Activated B cell treated with CpG ODN at 0.5 μM for 24 hours (primary cell): ENCODE measurements at regions of chr4 and their contacts with region 1.

Region 1: DNA sequence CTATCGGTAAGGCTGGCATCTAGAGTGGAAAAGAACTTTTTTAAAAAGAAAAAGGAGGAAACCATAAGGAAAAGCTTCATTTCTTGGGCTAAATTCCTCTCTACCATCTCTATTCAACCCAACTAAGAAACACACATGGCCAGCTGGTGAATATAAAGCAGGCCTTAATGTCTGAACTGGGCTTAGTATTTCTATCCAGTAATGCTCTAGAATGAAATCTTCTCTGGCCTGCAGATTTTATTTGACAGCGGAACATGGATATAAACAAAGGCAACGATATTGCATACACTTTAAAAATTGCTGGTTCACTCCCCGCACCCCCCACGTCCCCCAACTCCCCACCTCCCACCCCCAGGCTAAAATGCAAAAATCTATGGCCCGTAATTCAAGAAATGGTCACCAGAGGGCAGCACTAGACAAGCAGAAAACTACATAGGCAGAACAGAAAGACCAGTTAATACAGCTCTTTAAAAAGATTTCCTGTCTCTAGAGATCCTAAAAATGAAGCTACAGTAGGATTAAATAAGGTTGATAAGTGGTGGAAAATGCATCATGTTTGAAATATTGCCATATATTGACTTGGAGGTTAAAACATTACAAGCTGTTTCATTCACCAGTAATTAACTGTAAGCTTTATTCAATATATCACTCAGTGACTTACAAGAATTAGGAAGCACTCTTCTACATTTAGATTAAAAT is 155.2 kb upstream of the GALNT7 start:
- DNase-seq: no peak
- ATAC-seq: peak; percentile 61
- H3K4me3 Mint-ChIP-seq: no peak overlapping the region
- H3K27ac Mint-ChIP-seq: no peak overlapping the region
- H3K4me1 Mint-ChIP-seq: no peaks in the 10 kb centered on the region
- H3K27me3 Mint-ChIP-seq: peaks cover 1% of the 10 kb centered on the region
- CTCF ChIP-seq: no peak

Region 2: DNA sequence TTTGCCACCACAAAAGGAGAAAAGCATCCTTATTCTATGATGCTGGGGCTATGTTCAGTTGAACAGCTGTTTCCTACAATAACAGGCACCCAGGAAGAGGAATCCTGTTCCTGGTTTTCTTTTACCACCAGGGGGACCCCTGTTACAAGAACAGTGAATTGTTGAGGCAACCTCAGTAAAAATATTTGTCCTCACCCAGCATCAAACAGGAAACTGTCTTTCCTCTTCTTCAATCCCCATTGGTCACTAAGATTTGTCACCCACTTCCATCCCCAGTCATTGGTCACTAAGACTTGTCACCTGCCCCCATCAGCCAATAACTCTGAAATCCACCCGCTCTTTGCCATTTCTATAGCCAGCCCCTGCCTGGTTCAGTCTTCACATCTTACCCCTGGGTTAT is 11.8 kb after region 1 on chr4:
- CTCF ChIA-PET with region 1: interaction called, 22 read pairs
- POLR2A ChIA-PET with region 1: no interaction called
- intact Hi-C with region 1: no loop called
- DNase-seq: no peak
- ATAC-seq: no peak
- H3K4me3 Mint-ChIP-seq: no peak overlapping the region
- H3K27ac Mint-ChIP-seq: no peak overlapping the region
- H3K4me1 Mint-ChIP-seq: peaks cover 3% of the 10 kb centered on the region
- H3K27me3 Mint-ChIP-seq: no peaks in the 10 kb centered on the region
- CTCF ChIP-seq: no peak

Region 3: DNA sequence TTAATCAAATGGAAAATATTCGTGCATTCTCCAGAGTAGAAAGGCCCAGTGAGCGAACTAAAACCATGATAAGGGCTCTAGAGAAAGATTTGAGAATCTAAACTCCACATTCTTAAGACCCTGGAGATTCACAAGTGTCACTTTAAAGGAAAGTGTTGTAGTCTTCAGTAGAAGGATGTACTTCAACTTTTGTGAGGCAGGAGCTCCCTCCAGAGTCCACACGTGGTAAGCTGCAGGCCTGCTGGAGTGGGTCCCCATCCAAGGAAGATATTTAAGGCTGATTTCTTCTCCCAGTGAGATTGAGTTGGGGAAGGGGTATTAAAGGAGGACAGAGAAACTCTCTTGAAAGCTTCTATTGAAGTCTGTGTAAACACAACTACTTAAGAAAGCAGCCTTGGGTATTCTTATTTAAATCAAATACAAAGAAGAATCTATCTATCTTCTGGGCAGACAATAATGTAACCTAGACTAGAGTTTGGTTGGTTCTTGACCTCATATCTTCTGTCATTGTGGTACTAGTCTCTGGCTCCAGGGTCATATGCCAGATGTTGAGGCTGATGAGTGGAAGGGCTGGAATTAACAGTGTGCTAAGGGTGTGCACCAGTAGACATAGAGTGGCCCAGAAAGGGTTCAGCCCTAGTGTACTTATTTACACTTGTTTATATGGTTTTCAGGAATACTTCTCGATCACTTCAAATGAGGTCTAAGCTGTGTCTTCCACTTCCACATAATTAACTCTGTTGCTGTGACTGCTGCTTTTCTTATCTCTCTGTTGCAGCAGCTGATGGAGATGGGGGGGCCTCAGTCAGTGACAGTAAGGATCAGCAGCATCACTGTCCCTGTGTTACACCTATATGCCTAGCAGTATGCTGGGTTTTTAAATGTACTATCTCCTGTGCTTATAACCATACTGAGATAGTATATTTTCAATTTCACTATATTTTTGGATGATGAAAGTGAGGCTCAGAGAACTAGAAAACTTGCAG is 244.6 kb after region 1 on chr4:
- CTCF ChIA-PET with region 1: interaction called, 113 read pairs
- POLR2A ChIA-PET with region 1: no interaction called
- intact Hi-C with region 1: loop called (anchors 1 kb)
- DNase-seq: no peak
- ATAC-seq: peak; percentile 92
- H3K4me3 Mint-ChIP-seq: no peak overlapping the region
- H3K27ac Mint-ChIP-seq: no peak overlapping the region
- H3K4me1 Mint-ChIP-seq: peaks cover 23% of the 10 kb centered on the region
- H3K27me3 Mint-ChIP-seq: no peaks in the 10 kb centered on the region
- CTCF ChIP-seq: no peak

Region 4: DNA sequence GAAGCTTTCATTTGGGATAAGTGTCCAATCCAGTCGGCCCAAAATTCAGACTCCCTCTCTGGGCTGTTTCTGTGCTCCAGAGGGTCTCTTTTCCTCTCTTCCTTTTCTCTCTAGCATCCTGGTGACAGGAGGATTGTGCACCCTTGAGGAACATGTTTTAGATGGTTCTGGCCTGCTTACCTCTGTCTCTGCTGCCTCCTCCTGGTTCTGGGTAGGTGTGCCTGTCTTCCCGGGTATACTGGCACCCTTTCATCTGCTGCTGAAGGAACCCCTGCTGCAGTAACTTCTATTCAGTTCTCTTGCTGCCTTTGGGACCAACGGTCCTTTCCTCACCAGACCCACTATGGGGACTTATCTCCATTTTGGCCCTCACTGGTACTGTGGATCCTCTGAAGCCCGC is 267.6 kb after region 1 on chr4:
- CTCF ChIA-PET with region 1: interaction called, 10 read pairs
- POLR2A ChIA-PET with region 1: no interaction called
- intact Hi-C with region 1: no loop called
- DNase-seq: no peak
- ATAC-seq: no peak
- H3K4me3 Mint-ChIP-seq: no peak overlapping the region
- H3K27ac Mint-ChIP-seq: no peak overlapping the region
- H3K4me1 Mint-ChIP-seq: peaks cover 17% of the 10 kb centered on the region
- H3K27me3 Mint-ChIP-seq: no peaks in the 10 kb centered on the region
- CTCF ChIP-seq: no peak

Region 5: DNA sequence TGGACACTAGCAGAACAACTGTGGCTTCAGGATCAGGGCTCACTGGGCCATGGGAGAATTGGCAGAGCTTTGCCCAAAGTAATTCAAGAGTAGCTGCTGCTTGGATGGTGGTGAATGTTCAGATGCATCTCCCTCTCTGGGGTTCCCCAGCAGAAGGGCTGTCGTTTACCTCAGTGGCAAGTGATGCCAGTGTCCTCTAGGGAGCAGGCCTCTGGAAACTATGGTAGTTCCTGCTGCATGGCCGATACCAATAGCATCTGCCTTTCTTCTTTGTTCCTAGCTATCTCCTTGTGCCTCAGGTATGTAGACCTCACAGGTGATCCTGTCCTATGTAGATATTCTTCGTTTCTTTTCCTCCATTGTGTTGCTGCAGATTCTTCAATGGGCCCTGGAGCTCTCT is 294.4 kb after region 1 on chr4:
- CTCF ChIA-PET with region 1: interaction called, 13 read pairs
- POLR2A ChIA-PET with region 1: no interaction called
- intact Hi-C with region 1: no loop called
- DNase-seq: no peak
- ATAC-seq: no peak
- H3K4me3 Mint-ChIP-seq: no peak overlapping the region
- H3K27ac Mint-ChIP-seq: no peak overlapping the region
- H3K4me1 Mint-ChIP-seq: no peaks in the 10 kb centered on the region
- H3K27me3 Mint-ChIP-seq: no peaks in the 10 kb centered on the region
- CTCF ChIP-seq: no peak

Region 6: GRCh38 chr4:173420324-173420752 is 407.0 kb after region 1 on chr4:
- CTCF ChIA-PET with region 1: interaction called, 15 read pairs
- POLR2A ChIA-PET with region 1: no interaction called
- intact Hi-C with region 1: loop called (anchors 1 kb)
- DNase-seq: no peak
- ATAC-seq: no peak
- H3K4me3 Mint-ChIP-seq: no peak overlapping the region
- H3K27ac Mint-ChIP-seq: no peak overlapping the region
- H3K4me1 Mint-ChIP-seq: peaks cover 3% of the 10 kb centered on the region
- H3K27me3 Mint-ChIP-seq: no peaks in the 10 kb centered on the region
- CTCF ChIP-seq: no peak

Region 7: DNA sequence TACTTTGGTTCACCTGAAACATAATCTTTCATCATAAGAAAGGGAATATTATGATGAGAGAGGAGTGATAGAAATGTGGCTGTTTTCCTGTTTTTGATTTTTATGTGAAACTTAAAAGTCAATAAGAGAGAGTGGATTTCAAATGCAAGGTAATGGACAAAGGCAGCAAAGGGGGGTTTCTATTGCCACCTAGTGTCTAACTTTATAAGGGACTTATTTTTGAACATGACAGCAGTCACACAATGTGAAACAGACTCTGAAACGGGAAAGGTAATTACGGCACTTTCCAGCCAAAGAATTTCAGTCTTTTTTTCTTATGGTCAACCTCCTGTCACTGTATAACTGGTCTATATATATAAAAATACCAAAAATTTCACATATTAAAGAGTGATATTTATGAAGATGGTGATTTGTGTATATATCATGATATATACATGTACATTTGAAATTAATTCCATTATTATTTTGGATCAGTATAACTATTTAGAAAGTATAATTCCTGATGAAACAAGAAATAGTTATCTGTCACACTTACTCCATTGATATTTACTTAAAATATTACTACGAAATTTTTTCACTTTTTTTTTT is 1143.0 kb after region 1 on chr4:
- CTCF ChIA-PET with region 1: no interaction called
- POLR2A ChIA-PET with region 1: no interaction called
- intact Hi-C with region 1: loop called (anchors 1 kb)
- DNase-seq: no peak
- ATAC-seq: no peak
- H3K4me3 Mint-ChIP-seq: no peak overlapping the region
- H3K27ac Mint-ChIP-seq: no peak overlapping the region
- H3K4me1 Mint-ChIP-seq: no peaks in the 10 kb centered on the region
- H3K27me3 Mint-ChIP-seq: peaks cover 11% of the 10 kb centered on the region
- CTCF ChIP-seq: no peak